MCF 10A (cell line): ENCODE measurements at regions of chr3 and their contacts with region 1.

Region 1: GRCh38 chr3:136196401-136197158 is 445 bp upstream of the MSL2 start:
- DNase-seq: peak; percentile 100
- H3K4me3 Mint-ChIP-seq: peak overlapping the region; percentile 82
- H3K27ac Mint-ChIP-seq: peak overlapping the region; percentile 93
- H3K4me1 Mint-ChIP-seq: peaks cover 16% of the 10 kb centered on the region
- H3K27me3 Mint-ChIP-seq: no peaks in the 10 kb centered on the region
- CTCF ChIP-seq: no peak

Region 2: GRCh38 chr3:136075218-136075808 is 121.3 kb before region 1 on chr3:
- CTCF ChIA-PET with region 1: interaction called, 5 read pairs
- POLR2A ChIA-PET with region 1: interaction called, 4 read pairs
- intact Hi-C with region 1: loop called (anchors 2 kb)
- DNase-seq: peak; percentile 86
- H3K4me3 Mint-ChIP-seq: no peak overlapping the region
- H3K27ac Mint-ChIP-seq: peak overlapping the region; percentile 8
- H3K4me1 Mint-ChIP-seq: peaks cover 22% of the 10 kb centered on the region
- H3K27me3 Mint-ChIP-seq: no peaks in the 10 kb centered on the region
- CTCF ChIP-seq: peak; percentile 86

Region 3: DNA sequence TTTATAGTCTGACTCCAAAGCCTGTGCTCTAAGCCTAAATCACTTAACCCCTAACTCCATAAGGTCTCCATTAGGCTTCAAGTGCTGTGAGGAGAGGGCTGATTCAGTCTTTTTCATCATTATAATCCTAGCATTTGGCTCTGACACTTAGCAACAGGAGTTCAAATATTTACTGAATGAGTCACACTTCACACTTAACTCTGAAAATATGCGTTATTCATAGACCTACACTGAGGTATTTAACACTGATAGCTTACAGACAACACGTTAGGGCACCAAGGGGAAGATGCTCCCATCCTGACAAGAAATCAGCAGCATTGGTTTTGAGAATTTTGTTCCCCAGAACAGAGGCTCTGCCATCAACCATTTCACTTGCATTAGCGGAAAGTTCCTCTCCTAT is 54.0 kb before region 1 on chr3:
- CTCF ChIA-PET with region 1: interaction called, 5 read pairs
- POLR2A ChIA-PET with region 1: interaction called, 16 read pairs
- intact Hi-C with region 1: loop called (anchors 2 kb)
- DNase-seq: peak; percentile 76
- H3K4me3 Mint-ChIP-seq: no peak overlapping the region
- H3K27ac Mint-ChIP-seq: peak overlapping the region; percentile 87
- H3K4me1 Mint-ChIP-seq: peaks cover 24% of the 10 kb centered on the region
- H3K27me3 Mint-ChIP-seq: no peaks in the 10 kb centered on the region
- CTCF ChIP-seq: no peak

Region 4: GRCh38 chr3:136149667-136150066 is 46.9 kb before region 1 on chr3:
- CTCF ChIA-PET with region 1: interaction called, 5 read pairs
- POLR2A ChIA-PET with region 1: interaction called, 12 read pairs
- intact Hi-C with region 1: no loop called
- DNase-seq: peak; percentile 27
- H3K4me3 Mint-ChIP-seq: no peak overlapping the region
- H3K27ac Mint-ChIP-seq: peak overlapping the region; percentile 5
- H3K4me1 Mint-ChIP-seq: peaks cover 46% of the 10 kb centered on the region
- H3K27me3 Mint-ChIP-seq: no peaks in the 10 kb centered on the region
- CTCF ChIP-seq: no peak

Region 5: DNA sequence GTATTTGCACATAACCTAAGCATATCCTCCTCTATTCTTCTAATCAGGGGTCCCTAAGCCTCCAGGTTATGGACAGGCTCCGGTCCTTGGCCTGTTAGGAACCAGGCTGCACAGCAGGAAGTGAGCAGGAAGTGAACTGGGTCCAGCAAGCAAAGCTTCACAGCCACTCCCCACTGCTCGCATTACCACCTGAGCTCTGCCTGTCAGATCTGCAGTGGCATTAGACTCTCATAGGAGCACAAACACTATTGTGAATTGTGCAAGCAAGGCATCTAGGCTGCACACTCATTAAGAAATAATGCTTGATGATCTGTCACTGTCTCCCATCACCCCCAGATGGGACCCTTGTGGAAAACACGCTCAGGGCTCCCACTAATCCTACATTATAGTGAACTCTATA is 10.2 kb before region 1 on chr3:
- CTCF ChIA-PET with region 1: interaction called, 3 read pairs
- POLR2A ChIA-PET with region 1: interaction called, 15 read pairs
- intact Hi-C with region 1: no loop called
- DNase-seq: peak; percentile 59
- H3K4me3 Mint-ChIP-seq: no peak overlapping the region
- H3K27ac Mint-ChIP-seq: no peak overlapping the region
- H3K4me1 Mint-ChIP-seq: peaks cover 34% of the 10 kb centered on the region
- H3K27me3 Mint-ChIP-seq: no peaks in the 10 kb centered on the region
- CTCF ChIP-seq: no peak

Region 6: DNA sequence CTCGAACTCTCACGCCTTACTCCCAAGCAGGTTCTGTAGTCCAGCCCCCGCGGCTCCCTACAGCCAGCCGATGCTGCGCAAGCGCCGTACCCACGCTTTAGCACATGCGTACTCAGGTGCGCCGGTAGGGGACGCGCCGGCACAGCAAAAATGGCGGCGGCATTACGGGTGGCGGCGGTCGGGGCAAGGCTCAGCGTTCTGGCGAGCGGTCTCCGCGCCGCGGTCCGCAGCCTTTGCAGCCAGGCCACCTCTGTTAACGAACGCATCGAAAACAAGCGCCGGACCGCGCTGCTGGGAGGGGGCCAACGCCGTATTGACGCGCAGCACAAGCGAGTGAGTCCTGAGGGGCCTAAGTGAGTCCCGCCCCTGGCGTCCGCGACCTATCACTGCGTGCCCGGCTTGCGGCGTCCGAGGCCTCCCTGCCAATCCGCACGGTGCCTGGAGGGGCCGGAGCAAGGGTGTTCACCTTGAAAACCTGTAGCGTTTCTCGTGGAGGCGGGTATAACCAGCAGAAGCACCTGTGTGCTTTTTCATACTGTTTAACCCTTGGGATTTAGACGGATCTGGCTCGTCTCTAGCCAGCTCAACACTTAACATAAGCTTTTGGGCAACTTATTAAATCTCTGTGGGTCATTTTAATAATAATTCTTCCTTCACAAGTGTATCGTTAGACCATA is 53.8 kb after region 1 on chr3 and contains the start of gene PCCB:
- CTCF ChIA-PET with region 1: interaction called, 18 read pairs
- POLR2A ChIA-PET with region 1: interaction called, 43 read pairs
- intact Hi-C with region 1: loop called (anchors 1 kb)
- DNase-seq: peak; percentile 94
- H3K4me3 Mint-ChIP-seq: peak within 1 kb of the TSS; percentile 81
- H3K27ac Mint-ChIP-seq: peak within 1 kb of the TSS; percentile 67
- H3K4me1 Mint-ChIP-seq: peaks cover 17% of the 10 kb centered on the region
- H3K27me3 Mint-ChIP-seq: no peaks in the 10 kb centered on the region
- CTCF ChIP-seq: peak; percentile 65
- total RNA-seq, gene PCCB: 51.7 and 54.0 TPM in 2 replicates

Region 7: GRCh38 chr3:136396916-136397315 is 200.3 kb after region 1 on chr3:
- CTCF ChIA-PET with region 1: interaction called, 3 read pairs
- POLR2A ChIA-PET with region 1: interaction called, 3 read pairs
- intact Hi-C with region 1: loop called (anchors 10 kb)
- DNase-seq: no peak
- H3K4me3 Mint-ChIP-seq: no peak overlapping the region
- H3K27ac Mint-ChIP-seq: peak overlapping the region; percentile 7
- H3K4me1 Mint-ChIP-seq: no peaks in the 10 kb centered on the region
- H3K27me3 Mint-ChIP-seq: no peaks in the 10 kb centered on the region
- CTCF ChIP-seq: no peak

Region 8: DNA sequence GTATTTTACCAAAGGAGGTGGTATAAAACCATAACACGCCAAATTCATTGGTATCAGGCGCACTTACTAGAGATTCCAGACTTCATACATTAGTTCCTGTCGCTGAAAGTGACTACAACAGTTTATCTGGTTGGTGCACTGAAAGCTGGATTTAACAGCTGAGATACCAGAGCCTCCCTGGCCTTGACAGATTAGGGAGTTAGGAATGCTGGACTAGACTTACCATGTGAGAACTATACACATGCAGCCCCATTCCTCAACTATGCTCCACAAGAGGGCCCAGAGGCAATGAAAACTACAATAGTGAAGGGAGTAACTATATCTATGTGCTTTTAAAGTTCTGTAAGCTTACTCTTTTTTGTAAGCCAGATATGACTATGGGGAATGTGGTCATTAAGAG is 381.2 kb after region 1 on chr3:
- CTCF ChIA-PET with region 1: no interaction called
- POLR2A ChIA-PET with region 1: no interaction called
- intact Hi-C with region 1: no loop called
- DNase-seq: no peak
- H3K4me3 Mint-ChIP-seq: no peak overlapping the region
- H3K27ac Mint-ChIP-seq: no peak overlapping the region
- H3K4me1 Mint-ChIP-seq: no peaks in the 10 kb centered on the region
- H3K27me3 Mint-ChIP-seq: no peaks in the 10 kb centered on the region
- CTCF ChIP-seq: no peak